ENCODE measurements at regions of chr12 and their contacts with region 1.

Region 1: DNA sequence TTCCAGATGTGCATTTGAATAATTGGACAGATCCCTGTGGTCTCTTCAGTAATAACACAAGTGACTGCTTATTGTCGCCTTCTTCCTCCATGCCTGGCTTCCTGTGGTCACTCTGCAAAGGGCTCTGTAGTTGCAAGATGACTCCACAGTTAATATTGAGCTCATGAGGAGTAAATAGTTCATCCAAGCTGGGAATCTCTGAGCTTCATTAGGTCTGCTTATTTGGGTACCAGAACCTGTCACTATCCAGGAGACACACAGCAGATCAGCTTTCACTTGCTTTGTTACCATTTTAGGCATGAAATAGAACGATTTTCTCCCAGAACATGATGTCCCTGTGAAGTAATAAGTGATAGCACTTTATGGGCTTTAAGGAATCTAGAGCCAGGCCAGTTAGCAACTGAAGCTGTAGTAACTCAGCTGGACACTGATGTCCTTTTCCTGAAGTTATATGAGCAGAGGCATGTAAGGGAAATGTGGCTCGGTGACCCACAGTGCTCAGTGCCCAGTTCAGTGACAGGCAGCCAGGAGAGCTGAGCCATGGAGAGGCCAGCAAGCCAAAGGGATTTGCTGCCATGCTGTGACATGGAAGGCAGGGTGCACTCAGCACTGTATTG is 50.1 kb downstream of the CRADD start:
- DNase-seq: peak; percentile 35 to 73
- ATAC-seq: peak; percentile 89 to 92 (median 90)
- H3K4me3 ChIP-seq: peak overlapping the region; percentile 11
- H3K27ac ChIP-seq: peak overlapping the region; percentile 76
- H3K4me1 ChIP-seq: peaks cover 23% of the 10 kb centered on the region
- H3K27me3 ChIP-seq: no peaks in the 10 kb centered on the region
- CTCF ChIP-seq: no peak

Region 2: DNA sequence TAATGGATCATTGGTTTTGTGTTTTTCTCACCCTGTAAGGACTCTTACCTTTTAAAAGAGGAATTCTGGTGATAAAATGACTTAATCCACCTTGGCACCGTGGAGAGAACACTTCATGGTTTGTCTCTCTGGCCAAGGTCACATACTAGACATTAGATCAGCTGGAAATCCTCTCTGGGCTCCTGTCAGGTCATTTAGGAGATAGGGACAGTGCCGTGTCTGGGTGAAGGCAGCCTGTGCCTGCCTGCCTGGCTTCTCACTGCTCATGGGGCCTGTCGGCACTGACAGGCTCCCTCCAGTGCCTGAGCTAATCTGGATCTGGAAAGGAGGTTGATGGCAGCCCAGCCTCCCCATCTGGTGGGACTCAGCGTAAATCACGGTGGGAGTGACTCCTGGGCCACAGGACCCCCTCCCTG is 44.4 kb before region 1 on chr12:
- intact Hi-C with region 1: loop called (anchors 5 kb)
- DNase-seq: peak in 1 of 2 donors; percentile 51
- ATAC-seq: peak; percentile 44 to 62 (median 58)
- H3K4me3 ChIP-seq: peak overlapping the region; percentile 26
- H3K27ac ChIP-seq: peak overlapping the region; percentile 77
- H3K4me1 ChIP-seq: peaks cover 83% of the 10 kb centered on the region
- H3K27me3 ChIP-seq: no peaks in the 10 kb centered on the region
- CTCF ChIP-seq: no peak

Region 3: GRCh38 chr12:93696462-93696861 is 30.8 kb before region 1 on chr12:
- intact Hi-C with region 1: no loop called
- DNase-seq: no peak
- ATAC-seq: no peak
- H3K4me3 ChIP-seq: no peak overlapping the region
- H3K27ac ChIP-seq: no peak overlapping the region
- H3K4me1 ChIP-seq: peaks cover 14% of the 10 kb centered on the region
- H3K27me3 ChIP-seq: no peaks in the 10 kb centered on the region
- CTCF ChIP-seq: no peak

Region 4: GRCh38 chr12:93857279-93857938 is 130.1 kb after region 1 on chr12:
- intact Hi-C with region 1: no loop called
- DNase-seq: no peak
- ATAC-seq: peak in 3 of 4 donors; percentile 62 to 87 (median 68)
- H3K4me3 ChIP-seq: no peak overlapping the region
- H3K27ac ChIP-seq: no peak overlapping the region
- H3K4me1 ChIP-seq: no peaks in the 10 kb centered on the region
- H3K27me3 ChIP-seq: no peaks in the 10 kb centered on the region
- CTCF ChIP-seq: no peak

Measured in psoas muscle (tissue), 8 donors.